B cell (primary cell): ENCODE measurements at regions of chrX and their contacts with region 1.

Region 1: DNA sequence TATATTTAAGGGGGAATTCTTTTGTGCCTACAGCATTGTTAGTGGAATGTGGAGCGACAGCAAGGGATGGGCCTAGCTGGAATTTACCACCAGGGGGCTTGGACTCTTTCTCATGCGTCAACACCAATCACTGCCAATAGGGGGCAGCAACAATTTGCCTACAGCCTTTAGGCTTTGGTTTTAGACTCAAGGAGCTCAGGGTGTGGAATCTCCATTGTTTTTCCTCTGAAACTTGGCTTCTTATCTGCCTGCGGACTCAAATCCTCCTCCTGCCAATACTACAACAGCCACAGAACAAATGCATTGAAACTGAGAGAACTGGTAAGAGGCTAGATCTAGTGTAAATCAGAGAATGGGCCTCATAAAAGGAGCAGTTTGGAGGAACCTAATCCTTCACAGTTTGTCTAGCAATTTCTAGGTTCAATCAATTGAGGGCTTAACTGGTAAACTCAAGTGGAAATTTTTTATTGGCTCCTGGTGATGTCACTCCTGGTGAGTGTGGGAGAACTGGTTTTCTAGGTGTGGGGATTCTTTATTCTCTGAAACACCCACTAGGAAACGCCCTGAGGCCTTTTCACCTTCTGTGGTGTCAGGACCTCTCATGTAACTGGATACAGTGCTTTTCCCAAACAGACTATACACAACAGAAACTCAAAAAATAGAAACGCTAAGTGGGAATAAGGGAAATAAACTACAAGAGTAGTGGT is 27.9 kb upstream of the TMSB4X start:
- DNase-seq: peak; percentile 83
- ATAC-seq: peak; percentile 31
- H3K4me3 ChIP-seq: peak overlapping the region in 1 of 5 experiments; percentile 38
- H3K4me3 Mint-ChIP-seq: peak overlapping the region; percentile 74
- H3K27ac ChIP-seq: peak overlapping the region; percentile 49 to 88
- H3K27ac Mint-ChIP-seq: peak overlapping the region; percentile 91
- H3K4me1 ChIP-seq: peaks cover 56 to 57% of the 10 kb centered on the region in 2 donors
- H3K4me1 Mint-ChIP-seq: peaks cover 53% of the 10 kb centered on the region
- H3K27me3 ChIP-seq: no peaks in the 10 kb centered on the region
- H3K27me3 Mint-ChIP-seq: no peaks in the 10 kb centered on the region
- CTCF ChIP-seq: peak; percentile 90

Region 2: GRCh38 chrX:12936947-12937346 is 10.0 kb before region 1 on chrX:
- CTCF ChIA-PET with region 1: interaction called, 10 read pairs
- POLR2A ChIA-PET with region 1: no interaction called
- intact Hi-C with region 1: no loop called
- DNase-seq: no peak
- ATAC-seq: no peak
- H3K4me3 ChIP-seq: no peak overlapping the region
- H3K4me3 Mint-ChIP-seq: no peak overlapping the region
- H3K27ac ChIP-seq: no peak overlapping the region
- H3K27ac Mint-ChIP-seq: no peak overlapping the region
- H3K4me1 ChIP-seq: no peaks in the 10 kb centered on the region
- H3K4me1 Mint-ChIP-seq: no peaks in the 10 kb centered on the region
- H3K27me3 ChIP-seq: no peaks in the 10 kb centered on the region
- H3K27me3 Mint-ChIP-seq: no peaks in the 10 kb centered on the region
- CTCF ChIP-seq: no peak

Region 3: DNA sequence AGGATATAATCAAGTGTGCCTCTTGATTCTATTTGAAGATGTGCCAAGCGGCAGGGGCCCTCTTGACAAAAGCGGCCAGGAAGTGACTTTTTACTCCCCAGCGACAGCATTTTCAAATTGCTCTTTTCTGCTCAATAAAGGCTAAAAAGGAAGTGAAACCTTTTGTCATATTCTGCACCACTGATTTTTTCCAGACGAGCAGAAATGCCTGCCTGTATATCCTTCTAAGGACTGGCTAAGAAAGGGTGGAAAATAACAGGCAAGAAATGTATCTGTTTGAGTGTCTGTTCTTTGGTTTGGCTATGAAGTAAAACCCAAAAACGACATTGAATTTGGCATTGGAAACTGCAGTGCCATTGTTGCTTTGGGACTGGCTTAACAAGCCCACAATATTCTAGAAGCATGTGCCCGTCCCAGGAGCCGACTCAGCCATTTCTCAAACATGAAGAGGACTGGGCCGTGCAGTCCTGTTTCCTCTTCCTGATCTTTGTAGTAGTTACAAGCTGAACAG is 53.4 kb after region 1 on chrX:
- CTCF ChIA-PET with region 1: interaction called, 15 read pairs
- POLR2A ChIA-PET with region 1: interaction called, 6 read pairs
- intact Hi-C with region 1: loop called (anchors 1 kb)
- DNase-seq: peak; percentile 79
- ATAC-seq: peak; percentile 72
- H3K4me3 ChIP-seq: peak overlapping the region in 4 of 5 experiments; percentile 3 to 40 (median 10)
- H3K4me3 Mint-ChIP-seq: peak overlapping the region; percentile 84
- H3K27ac ChIP-seq: peak overlapping the region; percentile 76 to 80
- H3K27ac Mint-ChIP-seq: peak overlapping the region; percentile 95
- H3K4me1 ChIP-seq: peaks cover 64 to 69% of the 10 kb centered on the region in 2 donors
- H3K4me1 Mint-ChIP-seq: peaks cover 64% of the 10 kb centered on the region
- H3K27me3 ChIP-seq: no peaks in the 10 kb centered on the region
- H3K27me3 Mint-ChIP-seq: no peaks in the 10 kb centered on the region
- CTCF ChIP-seq: no peak

Region 4: DNA sequence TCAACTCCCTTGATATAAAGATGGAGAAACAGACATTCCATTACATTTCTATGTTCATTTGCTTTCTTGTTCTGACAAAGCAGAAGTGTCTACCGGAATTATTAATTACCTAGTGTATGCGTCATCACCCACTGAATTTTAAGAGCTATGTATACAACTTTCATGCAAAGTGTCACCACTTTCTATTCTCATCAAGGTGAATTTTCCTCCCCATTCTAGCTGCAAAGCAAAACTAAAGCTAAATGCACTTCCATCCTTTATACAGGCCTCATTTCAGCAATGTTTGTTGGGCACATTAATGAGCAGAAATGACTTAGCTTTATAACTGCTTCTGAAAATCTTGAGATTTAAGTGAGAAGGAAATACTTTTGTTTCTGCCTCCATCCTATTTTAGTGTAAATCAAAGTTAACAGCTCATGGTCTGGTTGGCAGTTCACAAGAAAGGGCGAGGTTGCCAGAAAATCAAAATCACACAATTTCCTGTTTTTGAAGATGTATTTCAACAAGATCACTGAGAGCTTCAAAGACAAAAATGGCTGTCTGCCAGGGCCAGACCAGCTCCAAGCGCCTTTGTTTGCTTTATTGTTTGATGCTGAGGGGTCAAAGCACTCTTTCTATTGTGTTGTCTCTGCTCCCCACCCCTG is 104.7 kb after region 1 on chrX:
- CTCF ChIA-PET with region 1: interaction called, 3 read pairs
- POLR2A ChIA-PET with region 1: interaction called, 3 read pairs
- intact Hi-C with region 1: loop called (anchors 1 kb)
- DNase-seq: peak; percentile 69
- ATAC-seq: peak; percentile 76
- H3K4me3 ChIP-seq: no peak overlapping the region
- H3K4me3 Mint-ChIP-seq: peak overlapping the region; percentile 45
- H3K27ac ChIP-seq: peak overlapping the region; percentile 79 to 85
- H3K27ac Mint-ChIP-seq: peak overlapping the region; percentile 93
- H3K4me1 ChIP-seq: peaks cover 35 to 42% of the 10 kb centered on the region in 2 donors
- H3K4me1 Mint-ChIP-seq: peaks cover 51% of the 10 kb centered on the region
- H3K27me3 ChIP-seq: no peaks in the 10 kb centered on the region
- H3K27me3 Mint-ChIP-seq: no peaks in the 10 kb centered on the region
- CTCF ChIP-seq: no peak

Region 5: GRCh38 chrX:13087322-13088155 is 140.5 kb after region 1 on chrX:
- CTCF ChIA-PET with region 1: interaction called, 173 read pairs
- POLR2A ChIA-PET with region 1: interaction called, 25 read pairs
- intact Hi-C with region 1: loop called (anchors 1 kb)
- DNase-seq: peak; percentile 89
- ATAC-seq: peak; percentile 73
- H3K4me3 ChIP-seq: peak overlapping the region in 1 of 5 experiments; percentile 44
- H3K4me3 Mint-ChIP-seq: peak overlapping the region; percentile 55
- H3K27ac ChIP-seq: peak overlapping the region; percentile 98
- H3K27ac Mint-ChIP-seq: peak overlapping the region; percentile 99
- H3K4me1 ChIP-seq: peaks cover 90 to 91% of the 10 kb centered on the region in 2 donors
- H3K4me1 Mint-ChIP-seq: peaks cover 86% of the 10 kb centered on the region
- H3K27me3 ChIP-seq: no peaks in the 10 kb centered on the region
- H3K27me3 Mint-ChIP-seq: no peaks in the 10 kb centered on the region
- CTCF ChIP-seq: no peak

Region 6: GRCh38 chrX:13357925-13358324 is 410.9 kb after region 1 on chrX:
- CTCF ChIA-PET with region 1: interaction called, 14 read pairs
- POLR2A ChIA-PET with region 1: no interaction called
- intact Hi-C with region 1: no loop called
- DNase-seq: no peak
- ATAC-seq: no peak
- H3K4me3 ChIP-seq: no peak overlapping the region
- H3K4me3 Mint-ChIP-seq: no peak overlapping the region
- H3K27ac ChIP-seq: no peak overlapping the region
- H3K27ac Mint-ChIP-seq: no peak overlapping the region
- H3K4me1 ChIP-seq: no peaks in the 10 kb centered on the region
- H3K4me1 Mint-ChIP-seq: peaks cover 8% of the 10 kb centered on the region
- H3K27me3 ChIP-seq: no peaks in the 10 kb centered on the region
- H3K27me3 Mint-ChIP-seq: no peaks in the 10 kb centered on the region
- CTCF ChIP-seq: no peak

Region 7: DNA sequence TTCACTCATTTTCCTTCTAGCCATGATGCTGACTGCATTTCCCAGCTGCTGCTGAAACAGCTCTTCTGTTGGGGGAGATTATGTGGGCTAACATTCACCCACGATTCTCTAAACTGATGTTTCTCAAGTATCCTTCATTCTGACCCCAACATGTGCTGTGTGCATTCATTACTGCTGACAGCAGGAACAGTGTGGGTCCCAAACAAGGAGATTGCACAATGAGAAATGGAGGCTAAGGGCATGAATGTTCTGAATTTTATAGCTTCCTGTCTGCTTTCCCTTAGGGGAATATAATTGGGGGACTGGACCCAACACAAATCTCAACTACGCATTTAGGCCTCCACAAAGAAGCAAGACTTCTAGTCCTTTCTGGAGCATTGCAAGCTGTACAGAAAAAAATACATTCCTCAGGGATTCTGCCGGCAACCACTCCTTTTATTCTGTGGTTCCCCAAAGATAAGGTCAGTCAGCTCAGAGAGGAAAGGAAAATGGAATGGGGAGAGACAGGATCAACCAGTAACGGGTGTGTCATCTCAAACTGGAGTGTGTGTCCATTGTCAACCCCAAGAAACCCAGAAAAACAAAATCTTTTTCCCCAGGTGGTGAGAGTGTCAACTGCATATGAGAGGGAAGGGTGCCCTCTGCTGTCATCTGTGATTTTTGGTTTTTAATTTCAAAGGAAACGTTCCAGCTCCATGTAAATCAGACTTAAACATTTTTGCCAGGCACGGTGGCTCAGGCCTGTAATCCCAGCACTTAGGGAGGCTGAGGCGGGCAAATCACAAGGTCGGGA is 540.9 kb after region 1 on chrX:
- CTCF ChIA-PET with region 1: interaction called, 145 read pairs
- POLR2A ChIA-PET with region 1: interaction called, 7 read pairs
- intact Hi-C with region 1: loop called (anchors 1 kb)
- DNase-seq: peak; percentile 70
- ATAC-seq: no peak
- H3K4me3 ChIP-seq: no peak overlapping the region
- H3K4me3 Mint-ChIP-seq: peak overlapping the region; percentile 56
- H3K27ac ChIP-seq: peak overlapping the region; percentile 84 to 90
- H3K27ac Mint-ChIP-seq: peak overlapping the region; percentile 91
- H3K4me1 ChIP-seq: peaks cover 18 to 22% of the 10 kb centered on the region in 2 donors
- H3K4me1 Mint-ChIP-seq: peaks cover 22% of the 10 kb centered on the region
- H3K27me3 ChIP-seq: peaks cover 0 to 4% (median 0%) of the 10 kb centered on the region in 4 experiments
- H3K27me3 Mint-ChIP-seq: no peaks in the 10 kb centered on the region
- CTCF ChIP-seq: peak; percentile 63